Astrocyte of the spinal cord (primary cell): ENCODE measurements at regions of chr10 and their contacts with region 1.

Region 1: GRCh38 chr10:110279407-110279986 is 25.2 kb downstream of the SMNDC1 start:
- DNase-seq: peak; percentile 72
- H3K4me3 ChIP-seq: no peak overlapping the region
- CTCF ChIP-seq: peak; percentile 67

Region 2: DNA sequence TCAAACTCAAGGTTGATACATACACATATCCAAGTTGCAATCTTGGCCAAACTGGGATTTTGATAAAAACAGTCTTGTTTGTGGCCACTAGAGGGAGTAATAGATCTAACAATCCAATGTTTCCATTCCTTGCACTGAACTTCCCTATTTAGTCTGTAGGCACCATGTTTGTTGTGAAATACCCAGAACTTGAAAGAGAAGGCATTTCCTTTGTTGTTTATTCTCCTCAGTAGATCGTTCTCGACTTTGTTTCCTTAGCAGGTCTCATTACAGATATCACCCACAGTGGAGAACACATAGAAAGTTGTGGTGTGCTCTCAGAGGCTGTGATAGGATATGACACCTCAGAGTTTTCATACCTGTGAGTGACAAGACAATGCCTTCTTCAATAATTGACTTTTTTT is 142.4 kb before region 1 on chr10:
- in situ Hi-C with region 1: loop called (anchors 25 kb)
- DNase-seq: peak; percentile 77
- H3K4me3 ChIP-seq: no peak overlapping the region
- CTCF ChIP-seq: peak; percentile 58

Region 3: GRCh38 chr10:110326351-110327032 is 47.0 kb after region 1 on chr10:
- in situ Hi-C with region 1: no loop called
- DNase-seq: peak; percentile 92
- H3K4me3 ChIP-seq: no peak overlapping the region
- CTCF ChIP-seq: no peak

Region 4: GRCh38 chr10:110354322-110354766 is 74.8 kb after region 1 on chr10:
- in situ Hi-C with region 1: no loop called
- DNase-seq: peak; percentile 87
- H3K4me3 ChIP-seq: no peak overlapping the region
- CTCF ChIP-seq: peak; percentile 89